CD4-positive, alpha-beta memory T cell (primary cell): ENCODE measurements at regions of chr14 and their contacts with region 1.

Region 1: DNA sequence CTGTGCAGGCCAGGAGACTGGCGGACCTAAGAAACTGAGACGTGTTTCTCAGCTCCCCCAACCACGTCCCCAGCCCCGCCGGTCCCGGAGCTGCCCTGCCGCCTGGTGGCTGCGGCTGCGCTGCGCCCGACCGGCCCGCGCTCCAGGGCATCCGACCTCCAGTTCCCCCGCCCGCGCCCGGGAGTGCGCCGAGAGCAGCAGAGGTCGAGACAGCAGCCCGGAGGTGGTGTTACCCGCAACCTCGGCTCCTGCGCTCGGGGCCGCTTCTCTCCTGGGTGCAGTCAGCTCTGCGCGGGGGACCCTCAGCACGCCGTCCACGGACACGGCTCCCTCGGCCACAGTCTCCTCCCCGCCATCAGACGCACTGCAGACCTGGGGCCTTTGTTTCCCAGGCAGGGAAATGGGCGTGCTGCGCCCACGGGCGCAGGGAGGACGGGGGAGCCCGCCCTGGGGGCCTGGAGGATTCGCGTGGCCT is 21.6 kb upstream of the GPR132 start:
- DNase-seq: peak; percentile 81 to 87 (median 84)
- H3K4me3 ChIP-seq: peak overlapping the region; percentile 23 to 57
- H3K4me3 Mint-ChIP-seq: peak overlapping the region; percentile 71 to 83 (median 78)
- H3K27ac ChIP-seq: peak overlapping the region; percentile 26
- H3K27ac Mint-ChIP-seq: peak overlapping the region in 3 of 7 donors; percentile 15 to 91 (median 77)
- H3K4me1 ChIP-seq: peaks cover 23% of the 10 kb centered on the region
- H3K4me1 Mint-ChIP-seq: peaks cover 13 to 24% (median 16%) of the 10 kb centered on the region in 4 donors
- H3K27me3 ChIP-seq: no peaks in the 10 kb centered on the region
- H3K27me3 Mint-ChIP-seq: peaks cover 0 to 1% of the 10 kb centered on the region in 2 donors

Region 2: DNA sequence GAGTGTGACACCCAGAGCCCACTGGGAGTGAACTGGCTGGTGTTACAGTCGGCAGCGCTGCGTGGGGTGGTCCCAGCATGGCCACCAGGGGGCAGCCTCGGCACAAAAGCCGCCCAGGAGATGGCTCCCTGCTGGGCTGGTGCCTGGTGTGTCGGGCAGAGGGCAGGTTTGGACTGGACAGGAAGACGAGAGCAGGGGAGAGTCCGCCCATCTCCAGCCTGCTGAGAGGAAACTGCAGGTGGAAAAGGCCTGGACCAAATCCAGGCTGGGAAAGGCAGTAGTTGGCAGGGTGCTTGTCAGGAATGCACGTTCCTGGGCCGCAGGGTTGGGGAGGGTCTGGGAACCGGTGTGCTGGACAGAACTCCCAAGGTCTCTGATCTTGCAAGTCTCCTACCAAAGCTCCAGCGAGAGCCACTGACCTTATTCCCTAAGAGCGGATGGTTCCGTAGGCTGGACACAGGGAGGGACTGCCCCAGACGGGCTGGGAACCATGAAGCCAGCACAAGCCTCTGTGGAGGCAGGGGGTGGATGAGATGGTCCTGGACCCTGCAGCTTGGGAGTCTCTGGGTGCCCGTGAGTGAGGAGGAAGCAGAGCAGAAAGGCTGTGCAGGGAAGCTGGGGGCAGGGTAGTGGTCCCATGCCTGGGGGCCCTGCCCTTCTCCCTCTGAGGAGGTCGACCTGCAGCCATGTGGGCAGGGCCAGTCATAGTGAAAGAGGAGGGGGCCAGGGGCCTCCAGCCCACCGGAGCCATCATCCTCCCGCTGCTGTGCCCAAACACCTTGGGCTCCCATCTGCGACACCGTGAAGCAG is 110.5 kb before region 1 on chr14:
- CTCF ChIA-PET with region 1: interaction called, 8 read pairs
- POLR2A ChIA-PET with region 1: no interaction called
- intact Hi-C with region 1: loop called (anchors 2 kb)
- DNase-seq: peak; percentile 80 to 87 (median 82)
- H3K4me3 ChIP-seq: no peak overlapping the region
- H3K4me3 Mint-ChIP-seq: peak overlapping the region; percentile 35 to 88 (median 64)
- H3K27ac ChIP-seq: no peak overlapping the region
- H3K27ac Mint-ChIP-seq: peak overlapping the region in 5 of 7 donors; percentile 19 to 66 (median 56)
- H3K4me1 ChIP-seq: peaks cover 17% of the 10 kb centered on the region
- H3K4me1 Mint-ChIP-seq: peaks cover 4 to 26% (median 13%) of the 10 kb centered on the region in 4 donors
- H3K27me3 ChIP-seq: peaks cover 13% of the 10 kb centered on the region
- H3K27me3 Mint-ChIP-seq: peaks cover 8 to 18% of the 10 kb centered on the region in 2 donors

Region 3: DNA sequence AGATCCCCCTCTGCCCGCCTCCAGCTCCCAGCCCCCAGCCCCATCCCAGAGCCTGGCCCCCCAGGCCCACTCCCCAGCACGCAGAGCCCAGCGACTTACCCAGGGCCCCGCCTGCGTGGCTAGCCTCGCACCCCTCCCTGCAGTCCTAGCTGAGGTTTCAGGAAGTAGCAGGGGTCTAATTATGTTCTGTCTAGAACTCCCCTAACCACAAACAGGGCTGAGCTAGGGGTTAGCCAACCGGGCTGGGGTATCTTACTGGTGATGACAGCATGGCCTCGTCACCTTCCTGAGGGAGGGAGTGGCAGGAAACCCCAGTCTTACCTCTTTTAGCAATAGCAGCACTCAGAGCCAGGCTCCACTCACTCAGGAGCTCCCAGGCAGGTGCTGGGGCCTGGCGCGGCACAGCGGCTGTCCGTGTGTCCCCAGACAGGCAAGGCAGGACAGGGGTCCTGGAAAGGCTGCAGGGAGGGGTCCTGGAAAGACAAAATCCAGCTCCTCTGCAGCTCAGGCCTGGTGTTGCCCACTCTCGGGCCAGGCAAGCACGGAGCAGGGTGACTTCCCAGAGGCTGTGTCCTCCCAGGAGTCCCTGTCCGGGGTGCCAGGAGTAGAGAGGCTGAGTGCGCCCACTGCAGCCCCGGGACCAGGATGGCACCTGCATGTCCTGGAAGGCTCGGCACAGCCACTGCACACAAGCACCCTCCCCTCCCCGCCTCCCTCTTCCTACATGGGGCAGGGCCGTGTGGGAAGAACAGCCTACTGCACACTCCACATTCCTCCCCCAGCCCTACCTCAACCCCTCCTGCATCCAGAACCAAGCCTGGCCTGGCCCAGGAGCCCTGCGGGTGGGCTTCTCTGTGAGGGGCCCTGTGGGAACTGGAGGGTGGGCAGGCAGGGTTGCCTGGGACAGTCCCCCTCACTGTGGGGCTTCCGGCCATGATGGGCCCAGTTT is 21.3 kb before region 1 on chr14 and contains the start of gene GPR132:
- CTCF ChIA-PET with region 1: interaction called, 163 read pairs
- POLR2A ChIA-PET with region 1: interaction called, 230 read pairs
- intact Hi-C with region 1: loop called (anchors 1 kb)
- DNase-seq: peak; percentile 93 to 99 (median 96)
- H3K4me3 ChIP-seq: peak within 1 kb of the TSS; percentile 89 to 97
- H3K4me3 Mint-ChIP-seq: peak within 1 kb of the TSS; percentile 89 to 97 (median 95)
- H3K27ac ChIP-seq: peak within 1 kb of the TSS; percentile 93
- H3K27ac Mint-ChIP-seq: peak within 1 kb of the TSS; percentile 92 to 100 (median 99)
- H3K4me1 ChIP-seq: peaks cover 91% of the 10 kb centered on the region
- H3K4me1 Mint-ChIP-seq: peaks cover 34 to 85% (median 62%) of the 10 kb centered on the region in 4 donors
- H3K27me3 ChIP-seq: no peaks in the 10 kb centered on the region
- H3K27me3 Mint-ChIP-seq: no peaks in the 10 kb centered on the region
- total RNA-seq, gene GPR132: 47.3 to 49.2 TPM

Region 4: DNA sequence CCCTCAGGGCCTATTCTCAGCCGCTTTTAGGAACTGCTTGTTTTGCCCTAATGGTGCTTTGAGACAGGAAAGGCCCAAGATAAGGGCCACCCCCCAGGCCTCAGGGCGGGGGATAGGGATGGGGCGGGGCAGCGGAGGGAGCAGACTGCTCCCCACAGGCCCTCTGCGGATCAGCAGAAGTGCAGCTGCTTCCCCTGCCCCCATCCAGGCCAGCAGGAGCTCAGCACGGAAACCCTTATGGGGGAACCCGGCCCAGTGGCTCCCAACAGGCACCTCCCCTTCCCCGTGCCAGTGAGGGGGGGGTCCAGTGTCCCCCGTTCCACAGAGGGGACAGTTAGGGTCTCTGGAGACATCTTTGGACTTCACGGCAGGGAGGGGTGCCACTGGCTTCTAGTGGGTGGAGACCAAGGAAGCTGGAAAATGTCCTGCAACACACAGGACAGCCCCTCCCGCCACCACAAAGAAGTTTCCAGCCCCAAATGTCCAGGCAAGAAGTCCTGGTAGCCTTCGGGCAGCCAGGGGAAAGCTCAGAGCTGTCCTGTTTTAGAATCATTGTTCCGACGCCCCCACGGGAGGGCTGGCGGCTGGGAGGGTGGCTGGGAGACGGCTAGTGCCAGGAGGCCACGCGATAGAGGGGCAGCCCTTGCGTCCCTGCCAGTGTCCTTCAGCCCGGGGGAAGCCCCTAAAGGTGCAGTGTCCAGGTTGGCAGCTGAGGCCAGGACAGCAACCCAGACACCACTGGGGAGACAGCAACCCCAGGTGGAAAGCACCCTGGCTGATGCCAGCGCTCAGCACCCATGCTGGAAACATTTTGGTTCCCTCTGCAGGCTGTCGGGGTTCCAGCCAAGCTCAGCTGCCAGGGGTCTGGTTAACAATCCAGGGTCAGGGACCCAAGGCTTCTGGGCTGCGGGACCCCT is 11.2 kb before region 1 on chr14:
- CTCF ChIA-PET with region 1: interaction called, 32 read pairs
- POLR2A ChIA-PET with region 1: interaction called, 39 read pairs
- intact Hi-C with region 1: no loop called
- DNase-seq: no peak
- H3K4me3 ChIP-seq: no peak overlapping the region
- H3K4me3 Mint-ChIP-seq: peak overlapping the region in 2 of 8 donors; percentile 6 to 46
- H3K27ac ChIP-seq: no peak overlapping the region
- H3K27ac Mint-ChIP-seq: no peak overlapping the region
- H3K4me1 ChIP-seq: peaks cover 27% of the 10 kb centered on the region
- H3K4me1 Mint-ChIP-seq: peaks cover 16 to 48% (median 23%) of the 10 kb centered on the region in 4 donors
- H3K27me3 ChIP-seq: no peaks in the 10 kb centered on the region
- H3K27me3 Mint-ChIP-seq: no peaks in the 10 kb centered on the region

Region 5: DNA sequence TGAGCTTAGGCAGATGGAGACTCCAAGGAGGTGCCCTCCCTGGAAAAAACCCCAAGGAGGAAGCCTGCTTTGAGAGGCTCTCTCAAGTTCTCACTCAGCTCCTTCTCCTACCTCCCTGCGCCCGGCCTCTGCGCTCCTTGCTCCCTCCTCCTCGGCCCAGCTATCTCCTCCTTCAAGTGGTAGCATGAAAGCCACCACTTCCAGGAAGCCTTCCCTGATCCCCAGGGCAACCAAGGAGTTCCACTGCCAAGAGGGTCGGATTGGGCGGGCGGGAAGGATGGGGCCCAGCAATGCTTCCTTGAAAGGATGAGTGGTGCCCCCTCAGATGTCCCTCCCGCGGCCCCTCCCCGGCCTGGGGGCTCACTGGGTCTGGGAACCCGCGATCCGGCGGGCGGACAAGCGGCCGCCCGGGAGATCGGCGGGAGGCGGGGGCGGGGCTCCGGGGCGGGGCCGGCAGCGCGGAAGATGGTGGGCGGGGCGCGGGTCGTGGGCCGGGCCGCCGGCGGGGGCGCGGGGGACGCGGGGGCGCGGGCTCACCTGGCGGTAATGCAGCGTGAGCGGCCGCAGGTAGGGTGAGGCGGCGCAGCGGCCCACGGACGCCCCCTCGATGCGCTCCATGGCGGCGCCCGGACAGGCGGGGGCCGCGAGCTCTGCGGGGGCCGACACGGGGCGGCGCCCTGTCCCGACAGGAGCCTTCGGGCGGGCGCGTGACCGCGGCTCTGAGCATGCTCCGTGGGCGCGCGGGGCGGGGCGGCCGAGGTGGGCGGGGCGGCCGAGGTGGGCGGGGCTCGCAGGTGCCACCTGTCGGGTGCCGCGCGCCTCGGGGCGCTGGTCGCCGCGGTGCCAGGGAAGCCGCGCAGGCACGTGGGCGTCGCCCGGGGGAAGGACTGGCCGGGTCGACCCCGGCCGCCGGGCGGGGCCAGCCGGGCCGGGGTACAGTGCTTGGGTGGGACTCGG is 94.0 kb after region 1 on chr14 and contains the start of gene NUDT14:
- CTCF ChIA-PET with region 1: interaction called, 7 read pairs
- POLR2A ChIA-PET with region 1: no interaction called
- intact Hi-C with region 1: loop called (anchors 5 kb)
- DNase-seq: peak; percentile 78 to 86 (median 82)
- H3K4me3 ChIP-seq: peak within 1 kb of the TSS in 1 of 2 donors; percentile 32
- H3K4me3 Mint-ChIP-seq: peak within 1 kb of the TSS; percentile 73 to 85 (median 77)
- H3K27ac ChIP-seq: no peak within 1 kb of the TSS
- H3K27ac Mint-ChIP-seq: peak within 1 kb of the TSS in 6 of 7 donors; percentile 31 to 89 (median 46)
- H3K4me1 ChIP-seq: peaks cover 28% of the 10 kb centered on the region
- H3K4me1 Mint-ChIP-seq: peaks cover 1 to 21% (median 8%) of the 10 kb centered on the region in 4 donors
- H3K27me3 ChIP-seq: no peaks in the 10 kb centered on the region
- H3K27me3 Mint-ChIP-seq: no peaks in the 10 kb centered on the region
- total RNA-seq, gene NUDT14: 17.4 to 18.0 TPM

Region 6: GRCh38 chr14:105255021-105255507 is 168.2 kb after region 1 on chr14:
- CTCF ChIA-PET with region 1: no interaction called
- POLR2A ChIA-PET with region 1: no interaction called
- intact Hi-C with region 1: no loop called
- DNase-seq: peak in 1 of 5 donors; percentile 7
- H3K4me3 ChIP-seq: no peak overlapping the region
- H3K4me3 Mint-ChIP-seq: no peak overlapping the region
- H3K27ac ChIP-seq: no peak overlapping the region
- H3K27ac Mint-ChIP-seq: no peak overlapping the region
- H3K4me1 ChIP-seq: peaks cover 10% of the 10 kb centered on the region
- H3K4me1 Mint-ChIP-seq: peaks cover 9 to 22% (median 14%) of the 10 kb centered on the region in 4 donors
- H3K27me3 ChIP-seq: no peaks in the 10 kb centered on the region
- H3K27me3 Mint-ChIP-seq: no peaks in the 10 kb centered on the region